Endothelial cell of umbilical vein (primary cell): ENCODE measurements at regions of chr6 and their contacts with region 1.

Region 1: DNA sequence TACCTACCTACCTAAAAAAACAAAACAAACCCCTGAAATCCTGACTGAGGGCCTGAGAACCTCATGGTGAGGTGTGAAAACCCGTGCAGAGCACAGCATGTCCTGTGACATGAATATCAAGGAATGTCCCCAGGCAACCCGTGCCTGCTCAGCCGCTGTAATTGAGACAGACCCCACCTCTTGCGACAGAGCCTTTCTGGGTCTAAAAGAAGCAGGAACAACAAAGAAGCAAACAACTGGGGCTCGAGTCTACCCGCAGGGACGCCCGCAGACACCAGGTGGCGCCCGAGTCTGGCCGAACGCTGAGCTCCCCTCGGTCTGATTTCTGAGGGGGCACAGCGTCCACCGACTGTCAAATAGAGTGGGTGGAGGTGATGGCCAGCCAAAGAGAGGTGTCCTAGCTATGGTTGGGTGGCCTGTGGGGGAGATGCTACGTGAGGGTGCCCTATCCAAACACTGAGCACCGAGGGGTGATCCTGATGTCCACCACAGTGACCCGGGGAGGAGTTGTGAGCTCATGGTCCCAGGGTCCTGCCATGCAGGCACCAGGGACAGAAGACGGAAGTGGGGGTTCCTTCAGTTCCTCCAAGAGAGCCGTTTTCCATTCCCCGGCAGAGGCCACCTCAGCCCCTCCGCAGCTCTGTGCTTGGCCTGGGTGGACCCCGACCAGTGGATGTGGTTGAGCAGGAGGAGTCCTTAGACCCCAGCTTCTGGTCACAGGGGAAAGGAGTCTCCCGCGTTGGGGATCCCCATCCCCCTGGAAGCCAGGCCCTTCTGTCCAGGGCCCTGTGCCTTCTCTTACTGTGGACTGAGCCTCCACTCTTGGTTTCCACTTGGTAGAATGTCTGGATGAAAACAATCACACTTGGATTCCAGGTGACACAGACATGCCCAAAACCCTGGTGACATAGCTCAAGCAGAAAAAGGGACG is 268.2 kb downstream of the CDC5L start:
- DNase-seq: peak; percentile 52
- H3K4me3 ChIP-seq: no peak overlapping the region
- H3K27ac ChIP-seq: no peak overlapping the region
- H3K4me1 ChIP-seq: no peaks in the 10 kb centered on the region
- H3K27me3 ChIP-seq: peaks cover 11 to 23% of the 10 kb centered on the region in 2 experiments
- CTCF ChIP-seq: peak; percentile 88 to 98
- POLR2A ChIP-seq: no peak

Region 2: DNA sequence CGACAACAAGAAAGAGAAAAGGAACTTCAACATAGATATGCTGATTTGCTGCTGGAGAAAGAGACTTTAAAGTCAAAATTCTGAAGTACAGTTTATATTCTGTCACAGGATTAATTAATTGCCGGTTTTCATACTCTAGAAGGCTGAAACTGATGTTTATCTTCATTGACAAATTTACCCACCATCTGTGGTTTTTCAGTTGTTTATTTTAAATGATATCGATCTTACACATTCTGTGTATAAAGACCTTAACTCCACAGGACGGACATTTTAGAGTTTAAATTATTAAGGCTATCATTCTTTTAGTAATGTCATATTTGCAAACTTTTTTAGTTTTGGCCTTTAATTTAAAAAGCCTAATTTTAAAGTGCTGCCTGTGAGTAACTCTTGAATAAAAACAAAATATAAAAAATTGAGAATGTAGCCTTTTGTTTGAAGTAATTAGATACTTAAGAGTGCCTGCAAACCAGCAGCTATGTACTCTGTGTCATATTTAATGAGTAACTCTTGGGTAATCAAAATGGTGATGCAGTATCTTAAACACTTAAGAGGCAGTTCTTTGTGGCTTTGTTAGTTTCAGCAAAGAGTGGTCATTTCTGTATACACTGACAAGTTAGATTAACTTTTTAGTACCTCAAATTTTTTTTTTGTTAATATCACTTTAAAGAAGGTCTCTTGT is 208.9 kb before region 1 on chr6:
- CTCF ChIA-PET with region 1: no interaction called
- POLR2A ChIA-PET with region 1: no interaction called
- dilution Hi-C with region 1: no loop called
- intact Hi-C with region 1: no loop called
- DNase-seq: no peak
- H3K4me3 ChIP-seq: no peak overlapping the region
- H3K27ac ChIP-seq: no peak overlapping the region
- H3K4me1 ChIP-seq: no peaks in the 10 kb centered on the region
- H3K27me3 ChIP-seq: no peaks in the 10 kb centered on the region
- CTCF ChIP-seq: no peak
- POLR2A ChIP-seq: no peak

Region 3: GRCh38 chr6:44630125-44631028 is 25.3 kb before region 1 on chr6:
- CTCF ChIA-PET with region 1: interaction called, 18 read pairs
- POLR2A ChIA-PET with region 1: no interaction called
- dilution Hi-C with region 1: no loop called
- intact Hi-C with region 1: no loop called
- DNase-seq: peak; percentile 19
- H3K4me3 ChIP-seq: no peak overlapping the region
- H3K27ac ChIP-seq: no peak overlapping the region
- H3K4me1 ChIP-seq: no peaks in the 10 kb centered on the region
- H3K27me3 ChIP-seq: peaks cover 3 to 4% of the 10 kb centered on the region in 2 experiments
- CTCF ChIP-seq: peak; percentile 13 to 63
- POLR2A ChIP-seq: no peak

Region 4: GRCh38 chr6:44667668-44668390 is 12.2 kb after region 1 on chr6:
- CTCF ChIA-PET with region 1: interaction called, 20 read pairs
- POLR2A ChIA-PET with region 1: no interaction called
- dilution Hi-C with region 1: no loop called
- intact Hi-C with region 1: no loop called
- DNase-seq: no peak
- H3K4me3 ChIP-seq: no peak overlapping the region
- H3K27ac ChIP-seq: no peak overlapping the region
- H3K4me1 ChIP-seq: no peaks in the 10 kb centered on the region
- H3K27me3 ChIP-seq: peaks cover 3 to 5% of the 10 kb centered on the region in 2 experiments
- CTCF ChIP-seq: peak; percentile 32 to 69
- POLR2A ChIP-seq: no peak

Region 5: GRCh38 chr6:45086360-45087084 is 430.8 kb after region 1 on chr6:
- CTCF ChIA-PET with region 1: interaction called, 5 read pairs
- POLR2A ChIA-PET with region 1: no interaction called
- dilution Hi-C with region 1: no loop called
- intact Hi-C with region 1: loop called (anchors 10 kb)
- DNase-seq: peak; percentile 7
- H3K4me3 ChIP-seq: no peak overlapping the region
- H3K27ac ChIP-seq: no peak overlapping the region
- H3K4me1 ChIP-seq: no peaks in the 10 kb centered on the region
- H3K27me3 ChIP-seq: no peaks in the 10 kb centered on the region
- CTCF ChIP-seq: no peak
- POLR2A ChIP-seq: no peak

Region 6: GRCh38 chr6:45421709-45422502 is 766.2 kb after region 1 on chr6:
- CTCF ChIA-PET with region 1: interaction called, 38 read pairs
- POLR2A ChIA-PET with region 1: no interaction called
- dilution Hi-C with region 1: no loop called
- intact Hi-C with region 1: loop called (anchors 2 kb)
- DNase-seq: peak; percentile 48
- H3K4me3 ChIP-seq: peak overlapping the region; percentile 24 to 44 (median 34)
- H3K27ac ChIP-seq: no peak overlapping the region
- H3K4me1 ChIP-seq: peaks cover 17% of the 10 kb centered on the region
- H3K27me3 ChIP-seq: peaks cover 63 to 96% of the 10 kb centered on the region in 2 experiments
- CTCF ChIP-seq: peak in 1 of 2 donors; percentile 28
- POLR2A ChIP-seq: no peak

Region 7: GRCh38 chr6:45930420-45931040 is 1274.9 kb after region 1 on chr6:
- CTCF ChIA-PET with region 1: interaction called, 302 read pairs
- POLR2A ChIA-PET with region 1: no interaction called
- dilution Hi-C with region 1: no loop called
- intact Hi-C with region 1: no loop called
- DNase-seq: peak; percentile 67
- H3K4me3 ChIP-seq: no peak overlapping the region
- H3K27ac ChIP-seq: no peak overlapping the region
- H3K4me1 ChIP-seq: no peaks in the 10 kb centered on the region
- H3K27me3 ChIP-seq: peaks cover 0 to 3% of the 10 kb centered on the region in 2 experiments
- CTCF ChIP-seq: peak; percentile 92 to 94
- POLR2A ChIP-seq: no peak